ENCODE measurements at regions of chr14 and their contacts with region 1.

Region 1: DNA sequence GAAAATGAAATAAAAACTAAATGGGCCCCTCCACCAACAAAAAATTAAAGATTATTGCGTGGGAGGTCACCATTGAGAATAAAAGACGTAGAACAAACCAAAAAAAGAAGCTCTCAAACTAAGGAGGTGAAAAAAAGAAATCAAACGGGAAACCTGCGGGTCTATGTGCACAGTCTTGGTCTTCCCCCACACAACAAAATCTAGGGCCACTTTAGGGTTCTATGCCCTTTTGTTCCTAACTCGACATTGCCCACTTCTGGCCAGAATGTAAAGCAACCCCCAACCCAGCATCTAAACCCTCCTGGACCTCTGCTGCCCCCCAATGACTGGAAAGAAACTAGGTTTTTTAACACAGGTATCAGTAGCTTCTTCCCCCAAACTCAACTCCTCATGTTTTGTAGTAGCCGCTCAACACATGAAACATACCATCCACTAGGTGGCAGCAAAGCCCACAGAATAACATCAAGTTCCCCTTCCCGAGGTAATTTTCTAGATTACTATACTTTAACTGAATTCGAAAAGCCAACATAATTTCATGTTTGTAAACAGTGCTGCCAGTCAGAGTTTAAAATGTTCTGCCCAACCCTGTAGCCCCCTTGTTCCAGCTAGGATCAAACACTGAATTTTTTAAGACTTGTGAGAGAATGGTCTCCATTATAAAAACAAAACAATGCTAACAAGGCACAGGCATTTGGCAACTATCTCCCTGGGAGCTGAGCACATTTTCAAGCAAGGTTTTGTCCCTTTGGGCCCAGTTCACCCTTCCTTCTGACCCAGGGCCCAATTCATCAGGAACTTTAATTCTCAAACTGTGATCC is 18.7 kb downstream of the DAD1 start:
- DNase-seq: peak; percentile 94 to 97 (median 96)
- H3K4me3 ChIP-seq: peak overlapping the region; percentile 6 to 41
- H3K4me3 Mint-ChIP-seq: peak overlapping the region; percentile 54 to 85 (median 80)
- H3K27ac ChIP-seq: peak overlapping the region; percentile 69
- H3K27ac Mint-ChIP-seq: peak overlapping the region; percentile 95 to 100 (median 98)
- H3K4me1 ChIP-seq: peaks cover 52% of the 10 kb centered on the region
- H3K4me1 Mint-ChIP-seq: peaks cover 38 to 57% (median 46%) of the 10 kb centered on the region in 4 donors
- H3K27me3 ChIP-seq: no peaks in the 10 kb centered on the region
- H3K27me3 Mint-ChIP-seq: no peaks in the 10 kb centered on the region

Region 2: GRCh38 chr14:21868442-21869046 is 701.8 kb before region 1 on chr14:
- CTCF ChIA-PET with region 1: interaction called, 4 read pairs
- POLR2A ChIA-PET with region 1: interaction called, 3 read pairs
- intact Hi-C with region 1: loop called (anchors 1 kb)
- DNase-seq: peak; percentile 64 to 82 (median 68)
- H3K4me3 ChIP-seq: no peak overlapping the region
- H3K4me3 Mint-ChIP-seq: peak overlapping the region; percentile 59 to 83 (median 74)
- H3K27ac ChIP-seq: no peak overlapping the region
- H3K27ac Mint-ChIP-seq: peak overlapping the region in 6 of 7 donors; percentile 53 to 83 (median 66)
- H3K4me1 ChIP-seq: peaks cover 31% of the 10 kb centered on the region
- H3K4me1 Mint-ChIP-seq: peaks cover 9 to 45% (median 24%) of the 10 kb centered on the region in 4 donors
- H3K27me3 ChIP-seq: no peaks in the 10 kb centered on the region
- H3K27me3 Mint-ChIP-seq: peaks cover 0 to 1% of the 10 kb centered on the region in 2 donors

Region 3: DNA sequence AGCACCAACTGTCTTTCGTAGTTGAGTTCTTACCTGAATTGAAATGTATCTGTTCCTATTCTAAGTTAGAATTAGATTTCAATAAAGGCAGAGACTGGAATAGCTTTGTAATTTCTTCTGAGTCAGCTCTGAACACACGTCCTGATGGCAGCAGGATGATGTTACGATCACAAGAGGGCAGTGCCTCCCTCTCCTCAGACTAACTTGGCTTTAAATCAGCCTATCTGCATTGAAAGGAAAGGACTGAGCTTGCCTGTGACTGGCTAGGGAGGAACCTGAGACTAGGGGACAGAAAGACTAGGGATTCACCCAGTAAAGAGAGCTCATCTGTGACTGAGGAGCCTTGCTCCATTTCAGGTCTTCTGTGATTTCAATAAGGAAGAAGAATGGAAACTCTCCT is 573.0 kb before region 1 on chr14:
- CTCF ChIA-PET with region 1: interaction called, 13 read pairs
- POLR2A ChIA-PET with region 1: interaction called, 8 read pairs
- intact Hi-C with region 1: no loop called
- DNase-seq: peak; percentile 33 to 58 (median 52)
- H3K4me3 ChIP-seq: peak overlapping the region in 1 of 2 donors; percentile 27
- H3K4me3 Mint-ChIP-seq: peak overlapping the region; percentile 87 to 96 (median 92)
- H3K27ac ChIP-seq: peak overlapping the region; percentile 51
- H3K27ac Mint-ChIP-seq: peak overlapping the region in 6 of 7 donors; percentile 86 to 97 (median 92)
- H3K4me1 ChIP-seq: peaks cover 18% of the 10 kb centered on the region
- H3K4me1 Mint-ChIP-seq: peaks cover 5 to 15% (median 8%) of the 10 kb centered on the region in 4 donors
- H3K27me3 ChIP-seq: no peaks in the 10 kb centered on the region
- H3K27me3 Mint-ChIP-seq: no peaks in the 10 kb centered on the region

Region 4: GRCh38 chr14:22510527-22511110 is 59.7 kb before region 1 on chr14:
- CTCF ChIA-PET with region 1: interaction called, 14 read pairs
- POLR2A ChIA-PET with region 1: interaction called, 405 read pairs
- intact Hi-C with region 1: no loop called
- DNase-seq: no peak
- H3K4me3 ChIP-seq: peak overlapping the region in 1 of 2 donors; percentile 29
- H3K4me3 Mint-ChIP-seq: peak overlapping the region; percentile 76 to 92 (median 89)
- H3K27ac ChIP-seq: peak overlapping the region; percentile 76
- H3K27ac Mint-ChIP-seq: peak overlapping the region; percentile 95 to 100 (median 98)
- H3K4me1 ChIP-seq: peaks cover 99% of the 10 kb centered on the region
- H3K4me1 Mint-ChIP-seq: peaks cover 56 to 93% (median 72%) of the 10 kb centered on the region in 4 donors
- H3K27me3 ChIP-seq: no peaks in the 10 kb centered on the region
- H3K27me3 Mint-ChIP-seq: no peaks in the 10 kb centered on the region

Region 5: GRCh38 chr14:22598099-22598899 is 28.0 kb after region 1 on chr14 and contains the start of gene ABHD4:
- CTCF ChIA-PET with region 1: interaction called, 174 read pairs
- POLR2A ChIA-PET with region 1: interaction called, 15 read pairs
- intact Hi-C with region 1: no loop called
- DNase-seq: peak; percentile 51 to 65 (median 54)
- H3K4me3 ChIP-seq: peak within 1 kb of the TSS; percentile 79 to 84
- H3K4me3 Mint-ChIP-seq: peak within 1 kb of the TSS; percentile 92 to 98 (median 97)
- H3K27ac ChIP-seq: peak within 1 kb of the TSS; percentile 74
- H3K27ac Mint-ChIP-seq: peak within 1 kb of the TSS; percentile 77 to 99 (median 94)
- H3K4me1 ChIP-seq: peaks cover 20% of the 10 kb centered on the region
- H3K4me1 Mint-ChIP-seq: peaks cover 16 to 43% (median 32%) of the 10 kb centered on the region in 4 donors
- H3K27me3 ChIP-seq: no peaks in the 10 kb centered on the region
- H3K27me3 Mint-ChIP-seq: no peaks in the 10 kb centered on the region
- total RNA-seq, gene ABHD4: 18.8 to 22.4 TPM

Region 6: DNA sequence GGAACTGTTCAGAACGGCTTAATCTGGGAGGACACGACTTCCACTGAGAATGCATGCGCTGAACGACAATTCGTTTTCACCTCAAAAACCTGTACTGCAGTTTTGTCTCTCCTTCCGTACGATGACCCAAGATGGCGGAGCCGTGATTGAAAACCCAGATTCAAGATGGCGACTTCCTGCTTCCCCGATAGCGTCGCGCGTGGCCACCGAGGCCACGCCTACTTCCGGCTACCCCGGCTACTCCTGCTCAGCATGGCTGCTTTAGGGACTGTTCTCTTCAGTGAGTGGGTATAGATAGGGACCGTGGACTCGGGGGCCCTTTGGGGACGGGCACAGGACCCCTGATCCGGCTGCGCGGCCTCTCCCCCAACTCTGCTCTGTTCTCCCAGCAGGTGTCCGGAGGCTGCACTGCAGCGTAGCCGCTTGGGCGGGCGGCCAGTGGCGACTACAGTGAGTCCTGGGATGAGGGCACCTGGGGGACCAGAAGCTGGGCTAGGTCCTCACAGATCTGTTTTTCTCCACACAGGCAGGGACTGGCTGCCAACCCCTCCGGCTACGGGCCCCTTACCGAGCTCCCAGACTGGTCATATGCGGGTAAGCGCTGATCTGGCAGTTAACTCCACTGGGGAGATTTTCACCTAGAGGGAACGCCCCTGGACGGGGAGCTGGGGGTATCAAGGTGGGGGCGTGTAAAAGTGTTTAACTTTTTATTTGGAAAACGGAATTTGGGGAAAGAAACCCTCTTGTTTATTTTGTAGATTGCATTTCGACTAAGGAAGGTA is 259.5 kb after region 1 on chr14 and contains the start of gene MRPL52:
- CTCF ChIA-PET with region 1: interaction called, 38 read pairs
- POLR2A ChIA-PET with region 1: interaction called, 7 read pairs
- intact Hi-C with region 1: loop called (anchors 2 kb)
- DNase-seq: peak; percentile 86 to 93 (median 88)
- H3K4me3 ChIP-seq: peak within 1 kb of the TSS; percentile 80 to 85
- H3K4me3 Mint-ChIP-seq: peak within 1 kb of the TSS; percentile 91 to 96 (median 92)
- H3K27ac ChIP-seq: peak within 1 kb of the TSS; percentile 85
- H3K27ac Mint-ChIP-seq: peak within 1 kb of the TSS; percentile 96 to 99 (median 98)
- H3K4me1 ChIP-seq: peaks cover 18% of the 10 kb centered on the region
- H3K4me1 Mint-ChIP-seq: peaks cover 17 to 32% (median 24%) of the 10 kb centered on the region in 4 donors
- H3K27me3 ChIP-seq: no peaks in the 10 kb centered on the region
- H3K27me3 Mint-ChIP-seq: peaks cover 0 to 1% of the 10 kb centered on the region in 2 donors
- total RNA-seq, gene MRPL52: 58.0 to 68.3 TPM

Region 7: DNA sequence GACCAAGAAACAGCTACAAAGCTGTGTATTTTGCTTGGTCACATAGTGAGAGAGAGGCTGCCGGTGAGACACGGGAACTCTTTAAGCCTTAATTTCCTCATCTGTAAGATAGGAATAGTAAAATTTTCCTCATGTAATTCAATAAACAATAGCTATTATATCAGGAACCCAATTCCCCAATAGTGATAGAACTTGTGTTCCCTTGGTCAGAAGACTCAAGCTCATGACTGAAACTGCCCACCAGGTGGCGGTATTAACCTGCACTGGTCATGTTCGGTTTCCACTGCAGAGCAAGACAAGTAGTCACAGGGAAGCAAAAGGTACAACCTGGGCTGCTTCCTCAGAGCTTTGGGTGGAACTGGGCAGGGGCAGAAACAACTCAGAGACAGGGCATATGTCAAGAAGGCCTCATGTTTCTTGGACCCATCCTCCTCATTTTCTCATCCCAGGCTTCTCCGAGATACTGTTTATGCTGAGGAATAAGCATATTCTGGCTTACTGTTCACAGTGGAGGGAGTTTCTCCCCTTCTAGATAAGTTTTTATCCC is 416.2 kb after region 1 on chr14:
- CTCF ChIA-PET with region 1: interaction called, 18 read pairs
- POLR2A ChIA-PET with region 1: interaction called, 9 read pairs
- intact Hi-C with region 1: loop called (anchors 1 kb)
- DNase-seq: peak; percentile 80 to 86 (median 81)
- H3K4me3 ChIP-seq: no peak overlapping the region
- H3K4me3 Mint-ChIP-seq: no peak overlapping the region
- H3K27ac ChIP-seq: no peak overlapping the region
- H3K27ac Mint-ChIP-seq: peak overlapping the region in 1 of 7 donors; percentile 41
- H3K4me1 ChIP-seq: peaks cover 8% of the 10 kb centered on the region
- H3K4me1 Mint-ChIP-seq: peaks cover 0 to 4% (median 0%) of the 10 kb centered on the region in 4 donors
- H3K27me3 ChIP-seq: no peaks in the 10 kb centered on the region
- H3K27me3 Mint-ChIP-seq: no peaks in the 10 kb centered on the region